ENCODE measurements at regions of chr20 and their contacts with region 1.

Region 1: GRCh38 chr20:12838261-12838866 is 170.4 kb upstream of the SPTLC3 start:
- DNase-seq: peak in 1 of 2 experiments; percentile 63
- H3K4me3 ChIP-seq: no peak overlapping the region
- H3K27ac ChIP-seq: no peak overlapping the region
- H3K4me1 ChIP-seq: peaks cover 0 to 2% (median 0%) of the 10 kb centered on the region in 4 experiments; a peak in 3 of 7 replicates
- H3K27me3 ChIP-seq: no peaks in the 10 kb centered on the region
- CTCF ChIP-seq: peak; percentile 73 to 84 (median 82)
- EP300 ChIP-seq: no peak
- POLR2A ChIP-seq: no peak
- RAD21 ChIP-seq: peak; percentile 43 to 65

Region 2: DNA sequence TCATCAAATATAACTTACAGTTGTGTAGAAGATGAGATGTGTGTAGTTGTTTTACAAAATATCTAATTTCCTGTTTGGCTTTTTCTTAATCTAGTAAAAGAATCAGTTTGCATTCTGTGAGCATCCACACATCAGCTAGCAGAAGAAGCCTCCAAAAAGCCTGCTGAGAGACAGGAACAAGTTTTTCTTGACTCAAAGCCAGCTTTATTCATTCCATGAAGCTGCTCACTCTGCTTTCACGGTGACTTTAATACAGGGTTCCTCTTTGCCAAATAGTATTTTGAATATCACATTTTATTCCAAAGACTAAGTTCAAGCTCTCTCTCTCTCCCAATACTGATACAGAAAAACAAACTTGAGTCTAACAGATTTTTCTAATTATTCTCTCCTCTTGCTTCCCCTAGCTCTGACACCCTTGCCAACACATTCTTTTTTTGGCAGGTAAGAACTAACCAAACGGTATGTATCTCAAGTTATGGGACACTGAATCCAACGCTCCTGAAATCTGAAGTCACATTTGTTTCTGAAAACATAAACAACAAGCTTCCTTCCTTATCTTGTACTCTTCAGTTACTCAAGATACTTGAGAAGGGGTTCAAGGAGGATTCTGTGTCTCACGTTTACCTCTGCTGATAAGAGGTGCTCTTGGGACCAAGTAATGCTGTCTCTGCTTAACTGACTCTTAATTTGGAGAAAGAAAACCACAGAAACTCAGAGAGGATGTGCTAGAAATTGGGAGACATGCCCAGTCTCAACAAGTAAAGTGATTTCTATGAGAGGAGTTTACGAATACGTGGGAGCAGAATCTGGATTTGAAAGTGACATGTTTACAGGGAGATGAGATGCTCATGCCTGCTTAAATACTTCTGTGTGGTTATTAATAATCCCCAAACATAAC is 13.8 kb before region 1 on chr20:
- CTCF ChIA-PET with region 1: interaction called, 11 read pairs
- POLR2A ChIA-PET with region 1: no interaction called
- DNase-seq: no peak
- H3K4me3 ChIP-seq: no peak overlapping the region
- H3K27ac ChIP-seq: no peak overlapping the region
- H3K4me1 ChIP-seq: no peaks in the 10 kb centered on the region
- H3K27me3 ChIP-seq: no peaks in the 10 kb centered on the region
- CTCF ChIP-seq: no peak
- EP300 ChIP-seq: no peak
- POLR2A ChIP-seq: no peak
- RAD21 ChIP-seq: no peak

Region 3: GRCh38 chr20:12875510-12875909 is 37.1 kb after region 1 on chr20:
- CTCF ChIA-PET with region 1: interaction called, 10 read pairs
- POLR2A ChIA-PET with region 1: no interaction called
- DNase-seq: no peak
- H3K4me3 ChIP-seq: no peak overlapping the region
- H3K27ac ChIP-seq: no peak overlapping the region
- H3K4me1 ChIP-seq: peaks cover 0 to 7% (median 3%) of the 10 kb centered on the region in 4 experiments; a peak in 3 of 7 replicates
- H3K27me3 ChIP-seq: no peaks in the 10 kb centered on the region
- CTCF ChIP-seq: no peak
- EP300 ChIP-seq: no peak
- POLR2A ChIP-seq: no peak
- RAD21 ChIP-seq: no peak

Region 4: DNA sequence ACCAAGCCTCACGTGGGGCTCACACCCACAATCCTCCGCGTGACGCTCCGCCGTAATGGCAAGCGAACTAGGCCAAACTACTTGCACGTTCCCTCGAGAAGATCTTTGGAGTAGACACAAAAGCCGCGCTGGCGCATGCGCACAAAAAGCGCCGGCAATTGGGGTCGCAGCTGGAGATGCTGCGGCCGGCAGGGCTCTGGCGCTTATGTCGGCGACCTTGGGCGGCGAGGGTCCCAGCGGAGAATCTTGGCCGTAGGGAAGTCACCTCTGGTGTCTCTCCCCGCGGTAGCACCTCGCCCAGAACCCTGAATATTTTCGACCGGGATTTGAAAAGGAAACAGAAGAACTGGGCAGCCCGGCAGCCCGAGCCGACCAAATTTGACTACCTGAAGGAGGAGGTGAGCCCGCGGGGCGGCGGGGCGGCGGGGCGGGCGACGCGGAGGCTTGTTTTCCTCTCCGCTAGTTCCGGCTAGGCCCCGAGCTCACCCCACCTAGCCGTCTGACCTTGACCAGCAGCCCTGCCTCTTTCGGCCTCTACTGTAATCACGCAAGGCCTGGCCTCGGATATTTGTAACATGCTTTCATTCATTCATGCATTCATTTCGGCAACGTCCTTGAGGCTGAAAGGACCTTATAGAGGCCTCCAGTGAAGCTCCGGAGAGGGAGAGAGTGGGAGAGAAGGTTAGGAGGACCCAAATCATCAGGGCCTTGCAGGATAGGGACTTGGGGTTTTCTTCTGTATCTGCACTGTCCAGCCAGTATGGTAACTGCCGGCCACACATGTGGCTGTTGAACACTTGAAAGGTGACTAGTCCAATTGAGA is 946.7 kb after region 1 on chr20 and contains the starts of genes ESF1 and NDUFAF5:
- CTCF ChIA-PET with region 1: no interaction called
- POLR2A ChIA-PET with region 1: no interaction called
- DNase-seq: peak; percentile 94 to 95
- H3K4me3 ChIP-seq: peak within 1 kb of the TSS; percentile 73 to 97 (median 78)
- H3K27ac ChIP-seq: peak within 1 kb of the TSS; percentile 84
- H3K4me1 ChIP-seq: peaks cover 0 to 4% (median 1%) of the 10 kb centered on the region in 4 experiments; a peak in 2 of 7 replicates
- H3K27me3 ChIP-seq: no peaks in the 10 kb centered on the region
- CTCF ChIP-seq: no peak
- EP300 ChIP-seq: 0 out of 3 replicates have a peak, but pooled peaks of 1 of the 2 experiments have one; percentile 17
- POLR2A ChIP-seq: peak; percentile 77 to 95
- RAD21 ChIP-seq: no peak
- total RNA-seq, gene ESF1: 31.1 and 32.9 TPM in 2 replicates
- total RNA-seq, gene NDUFAF5: 26.7 and 32.3 TPM in 2 replicates